AG04449 (cell line): ENCODE measurements at regions of chr6 and their contacts with region 1.

Region 1: DNA sequence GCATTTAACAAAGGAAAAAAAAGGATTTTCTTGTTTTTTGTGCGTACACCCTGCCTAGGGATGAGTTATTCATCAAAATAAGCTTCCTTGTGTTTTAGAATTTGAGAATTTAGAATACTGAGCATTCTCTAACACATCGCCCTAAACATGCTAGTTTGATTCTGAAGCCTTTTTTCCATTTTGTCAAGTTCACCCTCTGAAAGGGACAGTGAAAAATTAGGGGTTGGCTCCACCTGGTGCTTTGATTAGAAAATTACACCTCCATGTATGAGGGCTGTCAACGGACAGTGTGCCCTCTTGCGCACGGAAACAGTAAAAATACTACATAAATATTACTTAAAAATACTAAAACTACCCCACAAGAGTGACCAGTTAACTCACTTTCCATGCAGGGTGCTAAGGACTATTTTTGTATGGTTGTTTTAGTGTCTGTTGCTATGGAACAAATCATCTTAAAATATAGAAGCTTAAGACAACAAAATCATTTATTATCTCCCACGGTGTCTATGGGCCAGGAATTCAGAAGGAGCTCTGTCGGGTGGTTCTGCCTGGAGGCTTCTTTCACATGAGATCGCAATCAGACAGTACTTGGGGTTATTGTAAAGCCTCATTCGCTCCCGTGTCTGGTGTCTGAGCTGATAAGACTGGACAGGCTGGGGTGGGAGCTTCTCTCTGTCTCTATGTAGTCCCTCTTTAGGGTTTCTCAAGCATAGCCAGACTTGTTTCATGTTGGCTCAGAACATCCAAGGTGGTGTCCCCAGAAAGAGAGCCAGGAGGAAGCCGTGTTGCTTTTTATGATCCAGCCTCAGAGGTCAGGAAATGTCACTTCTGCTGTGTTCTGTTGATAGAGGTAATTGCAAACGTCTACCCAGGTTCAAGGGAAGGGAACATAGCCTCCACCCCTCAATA is 41.1 kb upstream of the TMEM170B start:
- DNase-seq: peak; percentile 37
- H3K4me3 ChIP-seq: no peak overlapping the region
- CTCF ChIP-seq: peak; percentile 68

Region 2: GRCh38 chr6:10954590-10955010 is 541.8 kb before region 1 on chr6:
- CTCF ChIA-PET with region 1: interaction called, 76 read pairs
- POLR2A ChIA-PET with region 1: no interaction called
- DNase-seq: peak; percentile 36
- H3K4me3 ChIP-seq: no peak overlapping the region
- CTCF ChIP-seq: peak; percentile 95

Region 3: DNA sequence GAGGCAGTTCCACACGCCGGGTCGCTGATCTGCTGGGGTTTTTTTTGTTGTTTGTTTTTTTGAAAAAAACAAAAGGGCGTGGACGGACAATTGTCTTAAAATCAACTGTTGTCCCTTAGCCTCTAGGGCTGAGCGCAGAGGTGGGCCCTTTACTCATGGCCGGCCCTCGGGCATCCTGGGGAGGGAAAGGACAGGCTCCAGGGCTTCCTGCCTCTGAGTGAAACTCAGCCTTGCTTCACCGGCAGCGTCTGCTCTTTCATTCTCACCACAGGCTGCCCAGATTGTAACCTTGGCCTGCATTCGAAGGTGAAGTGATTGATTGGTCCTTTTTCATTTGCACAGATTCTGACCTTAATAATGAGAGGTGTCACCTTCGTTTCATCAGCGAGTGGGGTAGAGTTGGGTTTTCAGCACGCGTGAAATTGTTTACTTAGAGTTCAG is 402.0 kb before region 1 on chr6:
- CTCF ChIA-PET with region 1: interaction called, 22 read pairs
- POLR2A ChIA-PET with region 1: interaction called, 3 read pairs
- DNase-seq: no peak
- H3K4me3 ChIP-seq: peak overlapping the region; percentile 100
- CTCF ChIP-seq: no peak

Region 4: GRCh38 chr6:11139056-11139960 is 357.1 kb before region 1 on chr6:
- CTCF ChIA-PET with region 1: interaction called, 167 read pairs
- POLR2A ChIA-PET with region 1: no interaction called
- DNase-seq: no peak
- H3K4me3 ChIP-seq: no peak overlapping the region
- CTCF ChIP-seq: no peak

Region 5: GRCh38 chr6:11172501-11173332 is 323.7 kb before region 1 on chr6:
- CTCF ChIA-PET with region 1: interaction called, 115 read pairs
- POLR2A ChIA-PET with region 1: no interaction called
- DNase-seq: no peak
- H3K4me3 ChIP-seq: no peak overlapping the region
- CTCF ChIP-seq: peak; percentile 77

Region 6: GRCh38 chr6:11212625-11213024 is 283.8 kb before region 1 on chr6:
- CTCF ChIA-PET with region 1: interaction called, 11 read pairs
- POLR2A ChIA-PET with region 1: no interaction called
- DNase-seq: no peak
- H3K4me3 ChIP-seq: no peak overlapping the region
- CTCF ChIP-seq: no peak

Region 7: GRCh38 chr6:11434565-11435326 is 61.7 kb before region 1 on chr6:
- CTCF ChIA-PET with region 1: interaction called, 26 read pairs
- POLR2A ChIA-PET with region 1: interaction called, 3 read pairs
- DNase-seq: peak; percentile 56
- H3K4me3 ChIP-seq: no peak overlapping the region
- CTCF ChIP-seq: no peak